ENCODE measurements at regions of chr5 and their contacts with region 1.

Region 1: DNA sequence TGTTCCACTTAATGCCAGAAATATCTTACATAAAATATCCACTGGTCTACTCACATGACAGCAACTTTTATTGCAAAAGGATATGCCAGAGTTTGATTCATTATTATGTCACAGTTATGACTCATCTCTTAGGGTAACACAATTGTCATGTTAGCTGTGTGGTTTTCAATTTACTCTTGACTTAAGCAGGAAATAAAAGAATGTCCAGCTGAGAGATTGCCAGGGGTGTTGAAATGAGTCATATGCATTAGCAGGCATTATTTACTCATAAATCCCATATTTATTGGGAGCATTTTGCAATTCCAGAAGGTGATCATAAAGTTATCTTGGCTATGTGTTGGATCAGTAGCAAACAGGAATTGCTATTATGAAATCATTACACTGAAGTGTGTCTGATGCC is 1164.6 kb upstream of the CDH18 start:
- DNase-seq: peak; percentile 96
- H3K4me3 ChIP-seq: no peak overlapping the region
- H3K27ac ChIP-seq: peak overlapping the region; percentile 51
- H3K4me1 ChIP-seq: peaks cover 19% of the 10 kb centered on the region
- H3K27me3 ChIP-seq: no peaks in the 10 kb centered on the region
- CTCF ChIP-seq: no peak

Region 2: GRCh38 chr5:21236971-21237427 is 84.4 kb after region 1 on chr5:
- CTCF ChIA-PET with region 1: no interaction called
- POLR2A ChIA-PET with region 1: interaction called, 5 read pairs
- intact Hi-C with region 1: loop called (anchors 2 kb)
- DNase-seq: peak; percentile 83
- H3K4me3 ChIP-seq: no peak overlapping the region
- H3K27ac ChIP-seq: peak overlapping the region; percentile 82
- H3K4me1 ChIP-seq: peaks cover 22% of the 10 kb centered on the region
- H3K27me3 ChIP-seq: no peaks in the 10 kb centered on the region
- CTCF ChIP-seq: no peak

Measured in A673 (cell line).